ENCODE measurements at regions of chr1 and their contacts with region 1.

Region 1: GRCh38 chr1:154760469-154760933 is 109.6 kb downstream of the KCNN3 start:
- DNase-seq: peak; percentile 19
- H3K4me3 ChIP-seq: peak overlapping the region in 1 of 3 experiments; percentile 29
- H3K27ac ChIP-seq: no peak overlapping the region
- H3K4me1 ChIP-seq: peaks cover 3% of the 10 kb centered on the region
- H3K27me3 ChIP-seq: peaks cover 8 to 34% of the 10 kb centered on the region in 2 experiments
- CTCF ChIP-seq: peak; percentile 76 to 86
- POLR2A ChIP-seq: no peak

Region 2: GRCh38 chr1:154695985-154696384 is 64.5 kb before region 1 on chr1:
- CTCF ChIA-PET with region 1: interaction called, 11 read pairs
- POLR2A ChIA-PET with region 1: no interaction called
- dilution Hi-C with region 1: no loop called
- intact Hi-C with region 1: no loop called
- DNase-seq: peak; percentile 24
- H3K4me3 ChIP-seq: no peak overlapping the region
- H3K27ac ChIP-seq: no peak overlapping the region
- H3K4me1 ChIP-seq: no peaks in the 10 kb centered on the region
- H3K27me3 ChIP-seq: peaks cover 12 to 35% of the 10 kb centered on the region in 2 experiments
- CTCF ChIP-seq: peak in 1 of 2 donors; percentile 39
- POLR2A ChIP-seq: no peak

Region 3: DNA sequence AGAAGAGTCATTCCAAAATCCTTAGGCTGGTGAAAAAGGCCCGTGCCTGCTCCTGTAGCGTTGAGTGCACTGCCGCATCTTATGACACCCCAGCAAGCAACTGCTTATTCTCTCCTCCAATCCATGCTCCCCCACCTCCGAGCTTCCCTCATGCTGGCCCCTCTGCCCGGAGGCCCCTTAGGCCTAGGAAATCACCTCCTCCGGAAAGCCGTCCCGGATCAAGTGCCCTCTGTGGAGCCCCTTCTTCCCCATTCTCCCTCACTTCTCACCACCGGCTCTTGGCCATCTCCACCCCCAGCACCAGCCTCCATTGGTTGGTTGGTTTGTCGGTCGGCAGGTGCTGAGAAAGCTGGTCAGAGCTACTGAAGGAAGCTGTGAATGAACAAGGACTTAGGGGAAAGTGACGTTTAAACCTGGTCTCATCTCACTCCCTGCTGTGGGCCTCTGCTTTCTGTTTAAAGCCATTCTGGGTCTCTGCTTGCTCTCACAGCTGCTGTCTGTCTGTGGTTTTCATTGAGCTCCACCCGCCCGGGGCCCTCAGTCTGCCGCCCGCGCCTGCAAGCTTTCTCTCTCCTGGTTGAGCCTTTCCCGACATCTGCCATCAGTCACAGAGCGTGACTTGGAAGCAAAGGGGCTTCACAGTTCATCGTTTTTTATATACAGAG is 12.6 kb before region 1 on chr1:
- CTCF ChIA-PET with region 1: interaction called, 13 read pairs
- POLR2A ChIA-PET with region 1: no interaction called
- dilution Hi-C with region 1: no loop called
- intact Hi-C with region 1: no loop called
- DNase-seq: no peak
- H3K4me3 ChIP-seq: no peak overlapping the region
- H3K27ac ChIP-seq: no peak overlapping the region
- H3K4me1 ChIP-seq: no peaks in the 10 kb centered on the region
- H3K27me3 ChIP-seq: peaks cover 41 to 46% of the 10 kb centered on the region in 2 experiments
- CTCF ChIP-seq: no peak
- POLR2A ChIP-seq: no peak

Region 4: GRCh38 chr1:154943649-154944400 is 183.3 kb after region 1 on chr1:
- CTCF ChIA-PET with region 1: interaction called, 10 read pairs
- POLR2A ChIA-PET with region 1: no interaction called
- dilution Hi-C with region 1: no loop called
- intact Hi-C with region 1: no loop called
- DNase-seq: peak; percentile 29
- H3K4me3 ChIP-seq: no peak overlapping the region
- H3K27ac ChIP-seq: no peak overlapping the region
- H3K4me1 ChIP-seq: no peaks in the 10 kb centered on the region
- H3K27me3 ChIP-seq: no peaks in the 10 kb centered on the region
- CTCF ChIP-seq: peak; percentile 69 to 85
- POLR2A ChIP-seq: no peak

Measured in endothelial cell of umbilical vein (primary cell).